Dorsolateral prefrontal cortex (tissue), 120 donors: ENCODE measurements at regions of chr1 and their contacts with region 1.

Region 1: GRCh38 chr1:37159102-37159501 is 124.8 kb upstream of the GRIK3 start:
- DNase-seq: no peak
- H3K4me3 ChIP-seq: no peak overlapping the region
- H3K27ac ChIP-seq: peak overlapping the region in 4 of 59 donors; percentile 78 to 90 (median 86)
- H3K27me3 ChIP-seq: no peaks in the 10 kb centered on the region
- CTCF ChIP-seq: no peak

Region 2: GRCh38 chr1:36691374-36691773 is 467.7 kb before region 1 on chr1:
- intact Hi-C with region 1: no loop called
- DNase-seq: no peak
- H3K4me3 ChIP-seq: no peak overlapping the region
- H3K27ac ChIP-seq: no peak overlapping the region
- H3K27me3 ChIP-seq: peaks cover 0 to 18% (median 3%) of the 10 kb centered on the region in 45 donors
- CTCF ChIP-seq: no peak

Region 3: GRCh38 chr1:37064039-37064438 is 95.1 kb before region 1 on chr1:
- intact Hi-C with region 1: loop called in 1 of 2 experiments (anchors 5 kb)
- DNase-seq: peak in 2 of 10 donors; percentile 37 to 38
- H3K4me3 ChIP-seq: no peak overlapping the region
- H3K27ac ChIP-seq: peak overlapping the region in 54 of 59 donors; percentile 18 to 88 (median 76)
- H3K27me3 ChIP-seq: peaks cover 0 to 6% (median 0%) of the 10 kb centered on the region in 45 donors
- CTCF ChIP-seq: no peak

Region 4: GRCh38 chr1:37308031-37308960 is 149.2 kb after region 1 on chr1:
- intact Hi-C with region 1: no loop called
- DNase-seq: peak; percentile 11 to 76 (median 68)
- H3K4me3 ChIP-seq: peak overlapping the region in 39 of 59 donors; percentile 1 to 50 (median 30)
- H3K27ac ChIP-seq: peak overlapping the region in 52 of 59 donors; percentile 4 to 84 (median 60)
- H3K27me3 ChIP-seq: peaks cover 0 to 5% (median 0%) of the 10 kb centered on the region in 45 donors
- CTCF ChIP-seq: peak in 33 of 56 donors; percentile 4 to 47 (median 16)

Region 5: DNA sequence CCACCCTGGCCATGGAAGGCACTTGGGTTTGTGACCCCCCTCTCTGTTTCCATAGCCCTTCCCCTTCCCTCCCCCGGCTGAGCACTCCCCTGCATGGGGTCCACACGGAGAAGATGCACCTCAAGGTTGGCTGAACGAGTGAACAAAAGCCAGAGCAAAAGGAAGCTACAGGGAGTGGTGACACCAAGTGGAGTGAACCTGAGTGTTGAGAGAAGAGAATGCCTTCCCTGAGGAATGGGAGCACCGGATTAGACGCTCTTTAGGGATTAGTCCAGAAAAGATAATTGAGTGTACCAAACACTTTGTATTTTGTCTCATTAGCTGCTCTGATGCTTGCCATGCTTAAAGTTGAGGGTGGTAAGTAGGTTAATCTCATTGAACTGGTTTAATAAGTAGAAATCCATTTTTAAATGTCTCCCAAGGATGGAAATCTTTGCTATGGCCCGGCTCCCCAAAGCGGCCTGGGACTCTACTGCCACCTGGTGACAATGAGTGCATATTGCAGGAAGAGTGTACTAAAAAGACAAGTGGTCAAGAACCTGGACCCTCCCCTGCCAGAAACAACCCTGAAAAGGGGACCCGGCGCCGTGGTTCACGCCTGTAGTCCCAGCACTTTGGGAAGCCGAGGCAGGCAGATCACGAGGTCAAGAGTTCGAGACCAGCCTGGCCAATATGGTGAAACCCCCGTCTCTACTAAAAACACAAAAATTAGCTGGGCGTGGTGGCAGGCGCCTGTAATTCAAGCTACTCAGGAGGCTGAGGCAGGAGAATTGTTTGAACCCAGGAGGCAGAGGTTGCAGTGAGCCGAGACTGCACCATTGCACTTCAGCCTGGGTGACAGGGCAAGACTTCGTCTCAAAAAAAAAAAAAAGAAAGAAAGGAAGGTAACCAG is 164.6 kb after region 1 on chr1:
- intact Hi-C with region 1: loop called in 1 of 2 experiments (anchors 10 kb)
- DNase-seq: no peak
- H3K4me3 ChIP-seq: no peak overlapping the region
- H3K27ac ChIP-seq: no peak overlapping the region
- H3K27me3 ChIP-seq: peaks cover 0 to 11% (median 0%) of the 10 kb centered on the region in 45 donors
- CTCF ChIP-seq: peak in 51 of 56 donors; percentile 15 to 60 (median 44)